GM18951 (cell line): ENCODE measurements at regions of chr22 and their contacts with region 1.

Region 1: DNA sequence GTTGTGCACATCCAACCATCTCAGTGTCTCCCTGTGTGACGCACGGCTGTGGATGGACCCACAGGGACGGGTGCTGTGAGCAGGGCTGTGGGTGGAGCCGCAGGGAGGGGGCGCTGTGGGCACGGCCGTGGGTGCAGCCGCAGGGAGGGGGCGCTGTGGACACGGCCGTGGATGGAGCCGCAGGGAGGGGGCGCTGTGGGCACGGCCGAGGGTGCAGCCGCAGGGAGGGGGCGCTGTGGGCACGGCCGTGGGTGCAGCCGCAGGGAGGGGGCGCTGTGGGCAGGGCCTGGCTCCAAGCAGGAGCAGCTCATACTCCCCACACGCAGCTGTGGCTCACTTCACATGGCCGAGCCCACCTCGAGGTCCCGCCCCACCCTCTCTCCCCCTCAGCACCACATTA is 6.0 kb upstream of the MAPK11 start:
- POLR2A ChIP-seq: no peak

Region 2: GRCh38 chr22:50326959-50327710 is 51.0 kb after region 1 on chr22 and contains the start of gene DENND6B:
- in situ Hi-C with region 1: loop called (anchors 5 kb)
- POLR2A ChIP-seq: peak; percentile 85

Region 3: DNA sequence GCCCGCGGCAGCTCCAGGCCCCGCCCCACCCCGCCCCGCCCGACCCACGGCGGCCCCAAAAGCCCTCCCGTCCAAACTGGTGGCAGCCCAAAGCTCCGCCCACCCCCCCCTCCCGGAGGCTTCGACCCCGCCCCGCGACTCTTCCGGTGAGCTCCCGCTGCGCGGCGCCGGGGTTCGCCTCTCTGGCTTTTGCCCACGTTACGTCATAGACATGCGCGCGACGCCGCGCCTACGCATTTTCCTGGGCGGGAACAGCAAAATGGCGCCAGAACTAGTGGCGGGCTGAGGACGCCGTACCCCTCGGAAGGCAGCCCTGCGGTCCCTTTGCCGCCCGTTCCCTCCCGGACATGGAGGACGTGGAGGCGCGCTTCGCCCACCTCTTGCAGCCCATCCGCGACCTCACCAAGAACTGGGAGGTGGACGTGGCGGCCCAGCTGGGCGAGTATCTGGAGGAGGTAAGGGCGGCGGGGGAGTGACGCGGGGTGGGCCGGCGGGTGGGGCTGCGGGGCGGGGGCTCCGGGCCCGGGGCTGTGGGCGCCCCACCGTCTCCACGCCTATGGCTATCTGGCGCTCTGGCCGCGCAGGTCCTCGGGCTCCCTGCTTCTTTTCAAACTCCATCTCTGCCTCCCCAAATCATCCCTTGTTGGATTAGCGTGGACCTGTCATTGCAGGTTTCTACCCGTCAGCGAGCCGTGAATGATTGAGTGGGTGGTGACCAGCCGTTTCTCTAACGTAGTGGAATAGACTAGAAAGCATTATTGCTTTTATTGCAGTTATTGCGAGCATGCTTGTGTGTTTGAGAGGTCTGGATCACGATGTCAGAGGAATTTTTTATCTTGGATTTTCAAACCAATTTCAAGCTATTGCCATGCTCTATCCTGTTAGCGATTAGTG is 232.1 kb after region 1 on chr22 and contains the start of gene NCAPH2:
- in situ Hi-C with region 1: loop called (anchors 10 kb)
- POLR2A ChIP-seq: peak; percentile 87